ENCODE measurements at regions of chr10 and their contacts with region 1.

Region 1: GRCh38 chr10:110600487-110601101 is 33.1 kb downstream of the SMC3 start:
- DNase-seq: peak; percentile 82
- H3K4me3 ChIP-seq: no peak overlapping the region
- H3K27ac ChIP-seq: no peak overlapping the region
- H3K4me1 ChIP-seq: no peaks in the 10 kb centered on the region
- CTCF ChIP-seq: peak; percentile 93

Region 2: GRCh38 chr10:110137142-110137545 is 463.4 kb before region 1 on chr10:
- CTCF ChIA-PET with region 1: no interaction called
- POLR2A ChIA-PET with region 1: no interaction called
- intact Hi-C with region 1: loop called (anchors 10 kb)
- DNase-seq: peak; percentile 83
- H3K4me3 ChIP-seq: no peak overlapping the region
- H3K27ac ChIP-seq: no peak overlapping the region
- H3K4me1 ChIP-seq: peaks cover 23% of the 10 kb centered on the region
- CTCF ChIP-seq: peak; percentile 98

Region 3: GRCh38 chr10:110304780-110305421 is 295.7 kb before region 1 on chr10 and contains the start of gene SMNDC1:
- CTCF ChIA-PET with region 1: interaction called, 3 read pairs
- POLR2A ChIA-PET with region 1: interaction called, 12 read pairs
- intact Hi-C with region 1: loop called (anchors 1 kb)
- DNase-seq: peak; percentile 99
- H3K4me3 ChIP-seq: peak within 1 kb of the TSS; percentile 99
- H3K27ac ChIP-seq: peak within 1 kb of the TSS; percentile 69
- H3K4me1 ChIP-seq: peaks cover 49% of the 10 kb centered on the region
- CTCF ChIP-seq: no peak
- total RNA-seq, gene SMNDC1: 8.1 and 10.0 TPM in 2 replicates

Region 4: DNA sequence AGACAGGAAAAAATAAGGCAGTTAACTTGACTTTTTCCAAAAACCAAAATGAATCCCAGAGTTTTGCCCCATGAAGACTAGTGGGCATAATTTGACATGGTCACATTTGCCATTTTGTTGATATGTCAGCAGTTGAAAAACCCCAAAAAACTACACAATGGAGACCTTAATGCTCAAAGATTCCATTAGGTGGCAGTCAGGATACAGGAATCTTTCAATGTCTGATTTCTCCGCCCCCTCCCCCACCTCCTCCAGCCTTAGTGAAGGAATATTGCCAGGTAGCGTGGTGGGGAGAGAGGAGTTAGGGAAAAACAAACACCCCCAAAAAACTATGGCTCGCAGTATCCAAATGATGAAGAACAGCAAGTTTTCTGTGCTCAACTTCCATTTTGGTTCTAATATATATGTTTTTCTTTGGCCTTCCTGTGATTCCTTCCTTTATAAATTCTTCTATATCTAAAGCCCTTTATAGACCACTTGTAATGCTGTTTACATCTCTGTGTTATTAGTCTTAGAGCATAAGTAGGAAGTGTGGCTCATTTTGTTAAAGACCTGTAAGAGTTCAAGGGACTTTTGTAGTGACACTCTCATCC is 289.1 kb before region 1 on chr10:
- CTCF ChIA-PET with region 1: interaction called, 3 read pairs
- POLR2A ChIA-PET with region 1: interaction called, 7 read pairs
- intact Hi-C with region 1: loop called (anchors 1 kb)
- DNase-seq: peak; percentile 77
- H3K4me3 ChIP-seq: no peak overlapping the region
- H3K27ac ChIP-seq: no peak overlapping the region
- H3K4me1 ChIP-seq: peaks cover 36% of the 10 kb centered on the region
- CTCF ChIP-seq: peak; percentile 93

Region 5: DNA sequence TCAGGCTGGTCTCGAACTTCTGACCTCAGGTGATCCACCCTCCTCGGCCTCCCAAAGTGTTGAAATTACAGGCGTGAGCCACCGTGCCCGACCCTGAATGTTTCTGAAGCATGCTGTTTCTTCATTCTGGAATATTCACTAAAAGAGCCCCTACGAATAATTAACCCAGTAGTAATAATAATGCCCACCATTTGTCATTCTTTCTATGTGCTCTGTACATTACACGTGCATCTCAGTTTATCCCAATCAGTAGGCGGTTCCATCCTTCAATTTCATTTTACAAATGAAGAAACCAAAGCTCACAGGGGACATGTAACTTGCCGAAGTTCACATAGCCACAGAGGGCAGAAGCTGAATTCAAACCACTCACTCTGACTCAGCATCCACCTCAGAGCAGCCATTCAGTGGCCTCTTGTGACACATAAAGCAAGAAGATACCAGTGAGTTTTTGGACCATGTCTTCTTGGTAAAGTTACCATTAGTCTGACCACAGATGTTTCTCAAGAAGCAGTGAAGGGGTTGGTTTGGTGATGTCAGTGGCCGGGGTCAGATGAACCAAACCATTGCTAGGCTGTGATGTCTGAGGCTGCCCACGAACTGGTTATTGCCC is 174.8 kb before region 1 on chr10:
- CTCF ChIA-PET with region 1: no interaction called
- POLR2A ChIA-PET with region 1: no interaction called
- intact Hi-C with region 1: no loop called
- DNase-seq: no peak
- H3K4me3 ChIP-seq: no peak overlapping the region
- H3K27ac ChIP-seq: no peak overlapping the region
- H3K4me1 ChIP-seq: peaks cover 64% of the 10 kb centered on the region
- CTCF ChIP-seq: no peak

Region 6: DNA sequence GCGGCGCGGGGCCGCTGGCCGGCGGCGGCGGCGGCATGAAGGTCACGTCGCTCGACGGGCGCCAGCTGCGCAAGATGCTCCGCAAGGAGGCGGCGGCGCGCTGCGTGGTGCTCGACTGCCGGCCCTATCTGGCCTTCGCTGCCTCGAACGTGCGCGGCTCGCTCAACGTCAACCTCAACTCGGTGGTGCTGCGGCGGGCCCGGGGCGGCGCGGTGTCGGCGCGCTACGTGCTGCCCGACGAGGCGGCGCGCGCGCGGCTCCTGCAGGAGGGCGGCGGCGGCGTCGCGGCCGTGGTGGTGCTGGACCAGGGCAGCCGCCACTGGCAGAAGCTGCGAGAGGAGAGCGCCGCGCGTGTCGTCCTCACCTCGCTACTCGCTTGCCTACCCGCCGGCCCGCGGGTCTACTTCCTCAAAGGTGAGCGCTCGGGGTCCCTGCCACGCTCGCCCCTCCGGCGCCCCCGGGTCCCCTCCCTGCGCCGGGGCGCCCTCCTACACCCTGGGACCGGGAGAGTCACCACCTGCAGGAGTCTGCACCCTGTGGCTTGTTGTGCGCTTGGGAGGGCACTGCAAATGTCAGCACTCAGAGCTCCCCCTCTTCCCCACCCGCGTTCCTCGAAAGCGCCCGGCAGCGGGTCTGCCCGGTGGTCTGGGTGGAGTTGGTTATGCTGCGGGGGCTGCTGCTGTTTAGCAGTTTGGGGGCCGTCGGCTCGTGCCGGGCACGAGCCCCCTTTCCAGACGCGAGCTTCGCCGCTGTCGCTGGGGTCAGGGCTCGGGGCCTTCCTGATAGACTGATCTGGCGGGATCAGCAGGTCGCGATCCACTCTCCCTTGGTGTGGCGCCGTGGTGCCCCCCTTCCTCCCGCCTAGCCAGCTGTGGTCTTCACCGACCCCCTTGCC is 102.3 kb before region 1 on chr10:
- CTCF ChIA-PET with region 1: no interaction called
- POLR2A ChIA-PET with region 1: no interaction called
- intact Hi-C with region 1: no loop called
- DNase-seq: peak; percentile 44
- H3K4me3 ChIP-seq: peak overlapping the region; percentile 70
- H3K27ac ChIP-seq: no peak overlapping the region
- H3K4me1 ChIP-seq: peaks cover 39% of the 10 kb centered on the region
- CTCF ChIP-seq: no peak

Region 7: GRCh38 chr10:110567201-110568054 is 33.2 kb before region 1 on chr10 and contains the start of gene SMC3:
- CTCF ChIA-PET with region 1: no interaction called
- POLR2A ChIA-PET with region 1: interaction called, 3 read pairs
- intact Hi-C with region 1: loop called (anchors 5 kb)
- DNase-seq: peak; percentile 96
- H3K4me3 ChIP-seq: peak within 1 kb of the TSS; percentile 98
- H3K27ac ChIP-seq: peak within 1 kb of the TSS; percentile 60
- H3K4me1 ChIP-seq: peaks cover 52% of the 10 kb centered on the region
- CTCF ChIP-seq: no peak
- total RNA-seq, gene SMC3: 38.4 and 50.0 TPM in 2 replicates

Region 8: GRCh38 chr10:110893559-110894179 is 293.1 kb after region 1 on chr10:
- CTCF ChIA-PET with region 1: no interaction called
- POLR2A ChIA-PET with region 1: no interaction called
- intact Hi-C with region 1: no loop called
- DNase-seq: peak; percentile 85
- H3K4me3 ChIP-seq: no peak overlapping the region
- H3K27ac ChIP-seq: no peak overlapping the region
- H3K4me1 ChIP-seq: peaks cover 4% of the 10 kb centered on the region
- CTCF ChIP-seq: peak; percentile 92